Dendritic cell treated with granulocyte-macrophage colony-stimulating factor and Interleukin-4, amounts not matched to agents 40 ng/mL and 50 ng/mL, for 4 days (primary cell): ENCODE measurements at regions of chr1 and their contacts with region 1.

Region 1: GRCh38 chr1:33384040-33384812 is 46.7 kb downstream of the PHC2 start:
- H3K4me3 Mint-ChIP-seq: no peak overlapping the region
- H3K27ac Mint-ChIP-seq: peak overlapping the region; percentile 68
- H3K4me1 Mint-ChIP-seq: peaks cover 63% of the 10 kb centered on the region
- H3K27me3 Mint-ChIP-seq: peaks cover 17% of the 10 kb centered on the region

Region 2: GRCh38 chr1:33455539-33456501 is 71.6 kb after region 1 on chr1:
- intact Hi-C with region 1: loop called (anchors 10 kb)
- H3K4me3 Mint-ChIP-seq: peak overlapping the region; percentile 66
- H3K27ac Mint-ChIP-seq: peak overlapping the region; percentile 83
- H3K4me1 Mint-ChIP-seq: peaks cover 56% of the 10 kb centered on the region
- H3K27me3 Mint-ChIP-seq: no peaks in the 10 kb centered on the region